Stomach (tissue), 19 donors: ENCODE measurements at regions of chr1 and their contacts with region 1.

Region 1: GRCh38 chr1:224113918-224114786 is at the start of gene FBXO28:
- DNase-seq: peak; percentile 97 to 98
- H3K4me3 ChIP-seq: peak within 1 kb of the TSS; percentile 68 to 96 (median 86)
- H3K27ac ChIP-seq: peak within 1 kb of the TSS; percentile 81 to 96 (median 91)
- H3K4me1 ChIP-seq: peaks cover 15 to 37% (median 29%) of the 10 kb centered on the region in 4 donors
- H3K27me3 ChIP-seq: peaks cover 0 to 5% (median 0%) of the 10 kb centered on the region in 3 donors
- CTCF ChIP-seq: no peak
- EP300 ChIP-seq: no peak
- POLR2A ChIP-seq: peak in 1 of 4 donors; percentile 38
- total RNA-seq, gene FBXO28: 4.6 to 44.2 (median 13.5) TPM

Region 2: GRCh38 chr1:224259936-224260335 is 145.8 kb after region 1 on chr1:
- intact Hi-C with region 1: no loop called
- DNase-seq: no peak
- H3K4me3 ChIP-seq: no peak overlapping the region
- H3K27ac ChIP-seq: no peak overlapping the region
- H3K4me1 ChIP-seq: peaks cover 0 to 11% (median 3%) of the 10 kb centered on the region in 4 donors
- H3K27me3 ChIP-seq: no peaks in the 10 kb centered on the region
- CTCF ChIP-seq: no peak
- EP300 ChIP-seq: no peak
- POLR2A ChIP-seq: no peak

Region 3: DNA sequence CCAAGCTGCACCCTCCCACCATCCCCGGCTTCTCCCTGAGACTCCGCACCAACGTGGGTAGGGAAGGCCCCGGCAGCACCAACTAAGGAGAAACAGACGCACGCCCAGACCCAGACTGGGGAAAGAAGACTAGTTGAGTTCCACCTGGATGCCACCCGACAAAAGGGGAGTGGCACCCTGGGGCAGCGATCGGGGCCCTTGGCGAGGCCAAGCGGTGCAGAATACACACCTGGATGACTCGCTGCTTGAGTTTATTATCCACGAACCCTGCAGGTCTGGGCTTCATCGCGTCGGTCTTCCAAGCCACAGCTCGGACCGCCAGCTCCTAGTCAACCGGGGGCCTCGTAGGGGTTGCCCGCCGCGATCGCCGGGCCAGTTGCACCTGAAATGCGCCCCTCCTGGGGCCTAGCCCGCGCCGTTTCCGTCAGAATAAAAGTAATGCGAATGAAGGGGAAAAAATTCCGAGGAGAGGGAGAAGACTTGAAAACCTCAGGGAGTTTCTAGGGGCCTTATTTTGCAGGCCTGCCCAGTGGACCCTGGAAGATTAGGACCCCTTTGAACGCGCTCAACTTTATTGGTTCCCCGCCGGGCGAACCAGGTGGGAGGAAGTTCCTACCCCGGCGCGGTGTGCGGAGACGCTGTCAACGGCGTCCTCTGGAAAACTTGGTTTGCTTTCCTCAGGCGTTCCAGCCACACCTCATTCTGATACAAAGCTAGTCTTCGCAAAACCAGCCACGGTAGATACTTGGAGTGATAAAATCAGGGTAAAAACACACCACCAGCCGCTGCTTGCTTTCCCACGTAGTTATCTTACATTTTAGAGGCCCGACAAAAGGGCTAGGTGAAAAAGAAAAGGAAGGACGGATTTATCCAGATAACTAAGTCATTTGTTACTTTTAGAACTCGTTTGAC is 215.9 kb after region 1 on chr1 and contains the start of gene NVL:
- intact Hi-C with region 1: loop called (anchors 5 kb)
- DNase-seq: peak; percentile 84 to 96
- H3K4me3 ChIP-seq: peak within 1 kb of the TSS; percentile 75 to 99 (median 88)
- H3K27ac ChIP-seq: peak within 1 kb of the TSS; percentile 83 to 95 (median 90)
- H3K4me1 ChIP-seq: peaks cover 17 to 56% (median 36%) of the 10 kb centered on the region in 4 donors
- H3K27me3 ChIP-seq: no peaks in the 10 kb centered on the region
- CTCF ChIP-seq: peak in 1 of 7 experiments; percentile 22
- EP300 ChIP-seq: no peak
- POLR2A ChIP-seq: no peak
- total RNA-seq, gene NVL: 18.7 to 50.9 (median 43.2) TPM

Region 4: GRCh38 chr1:224454397-224455066 is 340.4 kb after region 1 on chr1:
- intact Hi-C with region 1: loop called (anchors 10 kb)
- DNase-seq: peak in 1 of 2 donors; percentile 82
- H3K4me3 ChIP-seq: no peak overlapping the region
- H3K27ac ChIP-seq: peak overlapping the region in 2 of 5 donors; percentile 46 to 52
- H3K4me1 ChIP-seq: peaks cover 9 to 42% (median 19%) of the 10 kb centered on the region in 4 donors
- H3K27me3 ChIP-seq: no peaks in the 10 kb centered on the region
- CTCF ChIP-seq: no peak
- EP300 ChIP-seq: no peak
- POLR2A ChIP-seq: no peak